H1 (cell line): ENCODE measurements at regions of chr10 and their contacts with region 1.

Region 1: DNA sequence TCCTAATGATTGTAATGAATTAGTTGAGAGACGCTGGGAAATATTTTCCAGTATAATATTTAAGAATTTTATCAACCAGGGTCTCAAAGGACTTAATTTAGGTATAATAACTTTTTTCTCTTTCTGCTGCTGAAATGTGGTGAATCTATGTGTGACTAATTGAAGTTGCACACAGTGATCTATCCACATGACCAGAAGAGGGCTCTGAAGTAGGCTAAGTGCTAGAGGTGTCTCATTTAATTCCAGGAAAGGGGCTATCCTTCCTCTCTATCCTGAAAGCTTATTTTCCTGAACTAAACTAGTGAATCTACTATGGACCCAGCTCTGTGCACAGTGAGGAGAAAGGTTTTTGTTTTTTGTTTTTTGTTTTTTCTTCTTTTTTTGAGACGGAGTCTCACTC is 294.4 kb upstream of the MYO3A start:
- DNase-seq: no peak
- H3K4me3 ChIP-seq: no peak overlapping the region
- H3K27ac ChIP-seq: no peak overlapping the region
- H3K4me1 ChIP-seq: no peaks in the 10 kb centered on the region
- H3K27me3 ChIP-seq: no peaks in the 10 kb centered on the region
- CTCF ChIP-seq: no peak
- EP300 ChIP-seq: no peak
- POLR2A ChIP-seq: no peak
- RAD21 ChIP-seq: peak; percentile 6 to 32; a peak in 2 of 4 replicates

Region 2: GRCh38 chr10:25604591-25604990 is 35.1 kb before region 1 on chr10:
- CTCF ChIA-PET with region 1: no interaction called
- POLR2A ChIA-PET with region 1: no interaction called
- DNase-seq: no peak
- H3K4me3 ChIP-seq: no peak overlapping the region
- H3K27ac ChIP-seq: no peak overlapping the region
- H3K4me1 ChIP-seq: no peaks in the 10 kb centered on the region
- H3K27me3 ChIP-seq: no peaks in the 10 kb centered on the region
- CTCF ChIP-seq: no peak
- EP300 ChIP-seq: no peak
- POLR2A ChIP-seq: no peak
- RAD21 ChIP-seq: no peak

Region 3: DNA sequence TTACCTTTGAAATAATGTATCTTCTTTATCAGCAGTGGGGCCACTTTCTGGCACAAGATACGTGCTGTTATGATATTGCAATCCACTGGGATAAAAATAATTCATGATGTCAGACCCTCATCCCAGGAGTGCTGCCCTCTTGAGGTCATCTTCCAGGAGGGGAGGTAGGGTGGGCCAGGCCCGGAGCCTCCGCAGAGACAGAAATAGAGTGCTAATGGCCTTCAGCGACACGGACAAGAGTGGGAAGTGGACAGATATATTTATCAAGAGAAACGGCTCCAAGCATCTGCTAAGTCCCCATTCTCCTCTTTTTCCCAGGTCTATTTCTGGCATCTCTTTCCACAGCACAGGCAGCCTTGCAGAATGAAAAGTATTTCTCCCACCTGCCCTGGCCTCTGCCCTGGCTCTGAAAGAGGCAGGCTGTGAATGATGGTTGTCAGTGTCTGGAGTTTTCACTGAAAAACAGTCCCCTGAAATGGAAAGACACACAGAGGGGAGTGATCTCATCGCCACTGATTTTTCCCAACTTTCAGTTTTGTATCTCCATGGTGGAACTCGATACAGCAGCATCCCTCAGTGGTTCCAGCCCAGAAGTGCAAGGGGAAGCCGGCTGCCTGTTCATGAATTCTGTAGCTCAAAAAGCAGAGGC is 42.7 kb after region 1 on chr10:
- CTCF ChIA-PET with region 1: interaction called, 15 read pairs
- POLR2A ChIA-PET with region 1: no interaction called
- DNase-seq: no peak
- H3K4me3 ChIP-seq: no peak overlapping the region
- H3K27ac ChIP-seq: no peak overlapping the region
- H3K4me1 ChIP-seq: peaks cover 0 to 5% (median 1%) of the 10 kb centered on the region in 4 experiments; a peak in 1 of 7 replicates
- H3K27me3 ChIP-seq: no peaks in the 10 kb centered on the region
- CTCF ChIP-seq: peak; percentile 51 to 61 (median 54)
- EP300 ChIP-seq: no peak
- POLR2A ChIP-seq: no peak
- RAD21 ChIP-seq: peak; percentile 77 to 78

Region 4: GRCh38 chr10:25747084-25747483 is 107.4 kb after region 1 on chr10:
- CTCF ChIA-PET with region 1: no interaction called
- POLR2A ChIA-PET with region 1: no interaction called
- DNase-seq: no peak
- H3K4me3 ChIP-seq: no peak overlapping the region
- H3K27ac ChIP-seq: no peak overlapping the region
- H3K4me1 ChIP-seq: peaks cover 0 to 3% (median 0%) of the 10 kb centered on the region in 4 experiments; a peak in 2 of 7 replicates
- H3K27me3 ChIP-seq: no peaks in the 10 kb centered on the region
- CTCF ChIP-seq: no peak
- EP300 ChIP-seq: no peak
- POLR2A ChIP-seq: no peak
- RAD21 ChIP-seq: no peak

Region 5: DNA sequence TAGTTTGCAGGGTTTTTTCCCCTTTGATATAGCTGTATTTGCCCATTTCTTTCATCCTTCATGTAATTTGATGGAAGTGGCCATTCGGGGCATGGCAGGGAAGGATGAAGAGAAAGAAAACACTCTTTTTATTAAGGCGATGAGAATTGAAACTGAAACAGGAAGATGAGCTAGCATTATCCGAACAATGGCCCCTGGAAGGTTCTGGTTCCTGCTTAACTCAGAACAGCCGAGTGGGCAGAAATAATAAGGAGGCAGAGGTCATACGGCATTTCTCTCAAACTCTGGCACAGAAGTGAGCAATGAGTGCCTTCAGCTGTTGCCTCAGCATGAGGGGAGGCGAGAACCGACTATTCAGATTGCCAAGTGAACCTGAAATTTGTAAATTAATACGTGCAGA is 181.2 kb after region 1 on chr10:
- CTCF ChIA-PET with region 1: no interaction called
- POLR2A ChIA-PET with region 1: no interaction called
- DNase-seq: no peak
- H3K4me3 ChIP-seq: no peak overlapping the region
- H3K27ac ChIP-seq: no peak overlapping the region
- H3K4me1 ChIP-seq: peaks cover 0 to 6% (median 1%) of the 10 kb centered on the region in 4 experiments; a peak in 4 of 7 replicates
- H3K27me3 ChIP-seq: no peaks in the 10 kb centered on the region
- CTCF ChIP-seq: no peak
- EP300 ChIP-seq: no peak
- POLR2A ChIP-seq: no peak
- RAD21 ChIP-seq: no peak

Region 6: DNA sequence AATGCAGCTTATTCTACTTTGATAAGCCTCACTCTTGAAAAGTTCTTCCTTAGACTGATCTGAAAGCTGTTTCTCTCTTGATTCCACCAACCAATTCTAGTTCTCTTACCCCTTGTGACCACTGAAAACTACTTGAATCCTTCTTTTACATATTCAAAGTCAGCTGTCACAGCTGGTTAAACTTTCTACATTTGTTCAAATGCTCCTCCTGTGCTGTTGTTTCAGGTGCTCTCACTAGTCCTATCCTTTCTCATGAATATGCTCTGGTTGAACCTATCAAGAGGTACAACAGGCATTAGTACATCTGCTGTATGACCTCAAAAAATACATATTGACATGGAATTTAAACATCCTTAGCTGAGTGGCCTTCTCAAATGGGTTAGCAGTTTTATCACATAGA is 385.9 kb after region 1 on chr10:
- CTCF ChIA-PET with region 1: no interaction called
- POLR2A ChIA-PET with region 1: no interaction called
- DNase-seq: no peak
- H3K4me3 ChIP-seq: peak overlapping the region in 1 of 4 experiments; percentile 25; a peak in 1 of 8 replicates
- H3K27ac ChIP-seq: no peak overlapping the region
- H3K4me1 ChIP-seq: peaks cover 0 to 9% (median 1%) of the 10 kb centered on the region in 4 experiments; a peak in 3 of 7 replicates
- H3K27me3 ChIP-seq: no peaks in the 10 kb centered on the region
- CTCF ChIP-seq: no peak
- EP300 ChIP-seq: no peak
- POLR2A ChIP-seq: no peak
- RAD21 ChIP-seq: no peak